Activated CD4-positive, alpha-beta T cell treated with anti-CD3 and anti-CD28 coated beads, Interleukin-2, amount 10 ng/mL, durations not matched to agents 7 days and 5 days (primary cell): ENCODE measurements at regions of chr1 and their contacts with region 1.

Region 1: GRCh38 chr1:154860156-154860870 is 9.8 kb downstream of the KCNN3 start:
- DNase-seq: no peak
- H3K4me3 Mint-ChIP-seq: no peak overlapping the region
- H3K27ac Mint-ChIP-seq: no peak overlapping the region
- H3K4me1 Mint-ChIP-seq: peaks cover 9% of the 10 kb centered on the region
- H3K27me3 Mint-ChIP-seq: peaks cover 4% of the 10 kb centered on the region

Region 2: DNA sequence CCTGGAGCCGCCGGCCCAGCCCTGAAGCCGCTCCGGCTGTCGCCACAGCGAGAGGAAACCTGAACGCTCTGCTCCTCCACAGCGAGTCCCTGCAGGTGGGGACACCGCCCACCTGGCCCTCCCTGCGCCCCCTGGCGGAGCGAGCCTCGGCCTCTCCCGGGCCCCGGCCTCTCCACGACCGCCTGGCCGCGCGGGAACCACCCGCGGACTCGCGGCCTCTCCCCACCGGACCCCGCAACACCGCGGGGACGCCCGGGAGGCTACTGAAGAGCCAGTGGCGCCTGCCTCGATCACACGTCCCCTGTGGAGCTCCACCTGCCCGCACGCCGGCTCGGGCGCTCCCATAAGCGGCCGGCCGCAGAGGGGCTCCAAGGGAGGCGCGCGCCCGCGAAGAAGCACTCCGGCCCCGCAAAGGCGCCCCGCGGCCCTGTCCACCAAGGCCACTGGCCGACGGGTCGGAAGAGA is 99.8 kb before region 1 on chr1:
- CTCF ChIA-PET with region 1: no interaction called
- POLR2A ChIA-PET with region 1: no interaction called
- DNase-seq: peak; percentile 83
- H3K4me3 Mint-ChIP-seq: peak overlapping the region; percentile 51
- H3K27ac Mint-ChIP-seq: peak overlapping the region; percentile 52
- H3K4me1 Mint-ChIP-seq: peaks cover 44% of the 10 kb centered on the region
- H3K27me3 Mint-ChIP-seq: peaks cover 15% of the 10 kb centered on the region

Region 3: GRCh38 chr1:154849645-154850131 is 10.6 kb before region 1 on chr1:
- CTCF ChIA-PET with region 1: interaction called, 14 read pairs
- POLR2A ChIA-PET with region 1: no interaction called
- DNase-seq: no peak
- H3K4me3 Mint-ChIP-seq: no peak overlapping the region
- H3K27ac Mint-ChIP-seq: no peak overlapping the region
- H3K4me1 Mint-ChIP-seq: peaks cover 4% of the 10 kb centered on the region
- H3K27me3 Mint-ChIP-seq: peaks cover 2% of the 10 kb centered on the region

Region 4: DNA sequence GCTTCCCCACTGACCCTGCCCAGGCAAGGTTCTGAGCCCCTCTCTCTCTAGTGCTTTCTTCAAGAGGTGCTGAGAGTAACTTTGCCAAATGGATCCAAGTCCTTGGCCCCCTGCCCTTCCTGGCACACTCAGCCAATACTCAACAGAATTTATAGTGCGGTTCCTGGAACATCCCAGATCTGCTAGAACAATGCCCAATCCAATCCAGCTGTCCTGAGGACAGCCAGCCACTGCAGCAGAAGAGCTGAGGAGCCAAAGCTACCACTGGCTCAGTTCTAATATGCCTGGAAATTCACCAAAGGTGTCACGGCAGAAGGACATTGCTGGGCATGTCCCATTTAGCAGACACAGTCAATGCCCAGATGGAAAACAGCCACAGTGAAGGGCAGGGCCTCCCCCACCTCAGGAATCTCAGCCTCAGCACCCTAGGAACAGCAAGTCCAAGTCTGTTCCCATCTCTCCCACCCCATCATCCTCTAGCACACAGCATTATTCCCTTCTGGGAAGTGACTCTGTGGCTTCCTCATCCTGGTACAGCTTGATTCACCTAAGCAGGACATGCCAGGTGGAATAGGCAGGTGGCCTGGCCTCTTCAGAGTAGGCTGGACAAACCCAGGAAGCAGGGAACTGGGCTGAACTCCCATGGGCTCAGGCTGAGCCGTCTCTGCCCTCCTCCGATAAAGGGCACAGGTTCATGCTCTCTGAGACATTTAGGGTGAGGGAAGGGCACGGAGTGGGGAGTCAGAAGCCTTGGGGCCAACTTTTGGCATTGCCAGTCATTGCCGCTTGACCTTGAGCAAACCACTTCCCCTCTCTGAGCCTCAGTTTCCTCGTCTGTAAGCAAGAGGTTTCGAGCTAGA is 51.6 kb after region 1 on chr1:
- CTCF ChIA-PET with region 1: no interaction called
- POLR2A ChIA-PET with region 1: no interaction called
- DNase-seq: no peak
- H3K4me3 Mint-ChIP-seq: no peak overlapping the region
- H3K27ac Mint-ChIP-seq: no peak overlapping the region
- H3K4me1 Mint-ChIP-seq: no peaks in the 10 kb centered on the region
- H3K27me3 Mint-ChIP-seq: peaks cover 3% of the 10 kb centered on the region

Region 5: DNA sequence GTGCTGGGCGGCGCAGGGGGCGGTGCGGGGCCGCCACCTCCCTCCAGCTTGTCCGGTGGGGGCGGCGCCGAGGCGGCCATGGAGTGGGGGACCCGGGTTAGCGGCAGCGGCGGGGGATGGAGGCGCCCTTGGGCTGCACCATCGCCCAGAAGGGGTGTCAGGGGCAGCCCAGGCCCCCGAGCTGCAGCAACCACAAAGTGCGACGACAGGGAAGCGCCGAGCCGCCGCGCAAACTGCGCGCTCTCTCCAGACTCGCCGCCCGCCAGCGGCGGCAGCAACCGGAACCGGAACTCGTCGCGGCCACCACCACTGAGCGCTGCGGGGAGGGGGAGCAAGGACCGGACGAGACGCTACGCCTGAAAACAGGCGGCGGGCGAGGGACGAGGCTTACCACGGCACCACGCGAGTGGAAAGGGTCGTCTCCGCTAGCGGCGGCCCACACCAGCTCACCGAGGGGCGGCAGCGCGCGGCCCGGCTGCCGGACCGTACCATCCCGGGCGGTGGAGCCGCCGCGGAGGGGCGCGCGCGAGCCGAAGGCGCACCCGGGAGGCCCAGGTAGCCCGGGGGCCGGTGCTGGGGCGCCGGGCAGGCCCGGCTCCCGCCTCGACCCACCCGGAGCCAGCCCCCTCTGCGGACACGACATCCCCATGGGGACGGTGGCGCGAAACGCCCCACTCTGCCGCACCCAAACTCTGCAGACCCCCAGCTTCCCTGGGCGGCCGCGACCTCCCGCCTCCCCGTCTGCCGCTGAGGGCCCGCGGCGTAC is 101.4 kb after region 1 on chr1 and contains the start of gene PYGO2:
- CTCF ChIA-PET with region 1: no interaction called
- POLR2A ChIA-PET with region 1: no interaction called
- DNase-seq: peak; percentile 83
- H3K4me3 Mint-ChIP-seq: peak within 1 kb of the TSS; percentile 99
- H3K27ac Mint-ChIP-seq: peak within 1 kb of the TSS; percentile 93
- H3K4me1 Mint-ChIP-seq: peaks cover 53% of the 10 kb centered on the region
- H3K27me3 Mint-ChIP-seq: no peaks in the 10 kb centered on the region
- total RNA-seq, gene PYGO2: 50.0 to 50.2 TPM